Psoas muscle (tissue), 8 donors: ENCODE measurements at regions of chr20 and their contacts with region 1.

Region 1: GRCh38 chr20:37475252-37475651 is 45.8 kb upstream of the NNAT start:
- DNase-seq: no peak
- ATAC-seq: no peak
- H3K4me3 ChIP-seq: no peak overlapping the region
- H3K27ac ChIP-seq: no peak overlapping the region
- H3K4me1 ChIP-seq: no peaks in the 10 kb centered on the region
- H3K27me3 ChIP-seq: peaks cover 0 to 4% (median 0%) of the 10 kb centered on the region in 3 donors
- CTCF ChIP-seq: no peak

Region 2: DNA sequence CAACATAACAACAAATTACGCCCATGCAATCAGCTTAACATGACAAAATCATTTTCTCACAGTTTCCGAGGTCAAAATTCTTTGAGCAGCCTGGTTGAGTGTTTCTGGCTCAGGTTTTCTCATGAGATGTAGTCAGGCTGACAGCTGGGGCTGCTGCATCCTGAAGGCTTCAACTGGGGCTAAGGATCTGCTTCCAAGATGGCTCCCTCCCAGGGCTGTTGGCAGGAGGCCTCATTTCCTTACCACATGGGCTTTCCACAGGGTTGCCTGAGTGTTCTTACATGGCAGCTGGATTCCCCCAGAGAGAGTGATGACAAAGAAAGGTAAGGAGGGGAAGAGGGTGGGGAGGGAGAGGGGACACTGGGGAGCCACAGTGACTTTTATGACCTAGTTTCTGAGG is 17.3 kb before region 1 on chr20:
- intact Hi-C with region 1: loop called in 1 of 2 experiments (anchors 2 kb)
- DNase-seq: peak in 1 of 2 donors; percentile 60
- ATAC-seq: peak in 3 of 4 donors; percentile 34 to 64 (median 49)
- H3K4me3 ChIP-seq: no peak overlapping the region
- H3K27ac ChIP-seq: no peak overlapping the region
- H3K4me1 ChIP-seq: no peaks in the 10 kb centered on the region
- H3K27me3 ChIP-seq: peaks cover 0 to 6% (median 0%) of the 10 kb centered on the region in 3 donors
- CTCF ChIP-seq: no peak